ENCODE measurements at regions of chr2 and their contacts with region 1.

Region 1: GRCh38 chr2:172307800-172308199 is 119.6 kb upstream of the ITGA6 start:
- DNase-seq: peak; percentile 94
- H3K4me3 ChIP-seq: no peak overlapping the region
- H3K27ac ChIP-seq: peak overlapping the region; percentile 88
- H3K4me1 ChIP-seq: peaks cover 31% of the 10 kb centered on the region
- H3K27me3 ChIP-seq: no peaks in the 10 kb centered on the region
- CTCF ChIP-seq: no peak
- POLR2A ChIP-seq: no peak

Region 2: DNA sequence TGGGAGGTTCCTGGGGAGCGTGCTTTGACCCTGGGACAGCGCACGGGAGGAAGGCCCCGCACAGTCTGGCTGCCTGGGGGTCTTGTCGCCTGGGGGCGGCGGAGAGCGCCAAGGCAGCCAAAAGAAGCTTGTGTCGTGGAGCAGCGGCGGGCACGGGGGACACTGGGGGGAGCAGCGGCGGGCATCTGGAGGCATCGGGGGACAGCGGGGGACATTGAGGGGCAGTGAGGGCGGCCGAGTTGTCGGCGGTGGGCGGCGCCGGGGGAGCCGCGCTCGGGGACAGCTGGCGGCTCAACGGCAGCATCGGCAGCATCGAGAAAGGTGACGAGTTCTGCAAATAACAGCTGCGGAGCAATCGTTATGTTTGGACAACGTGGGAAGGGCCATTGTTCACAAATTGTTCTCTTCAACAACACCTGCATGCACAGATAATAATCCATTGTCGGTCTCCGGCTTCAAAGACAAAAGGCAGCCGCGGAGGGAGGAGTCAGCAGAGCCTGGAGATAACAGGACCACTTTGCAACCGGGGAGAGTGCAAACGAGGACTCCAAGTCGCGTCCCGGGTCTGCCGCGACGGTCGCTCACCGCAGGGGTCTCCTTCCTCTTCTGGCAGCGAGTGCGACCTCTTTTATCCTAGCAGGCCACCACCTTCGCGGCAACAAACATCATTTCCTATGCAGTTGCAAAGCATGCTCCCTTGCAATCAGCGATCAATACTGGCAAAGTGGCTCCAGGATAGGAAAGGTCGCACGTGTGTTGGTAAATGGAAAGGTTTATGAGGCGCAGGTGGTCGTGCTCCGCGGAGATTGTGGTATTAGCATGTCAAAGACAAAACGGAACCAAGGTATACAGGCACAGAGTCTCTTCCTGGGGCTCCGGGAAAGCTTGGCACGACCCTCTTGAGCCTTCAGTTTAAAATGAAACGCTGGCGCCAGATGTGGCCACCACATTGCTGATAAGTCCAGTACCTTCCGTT is 72.8 kb before region 1 on chr2:
- CTCF ChIA-PET with region 1: no interaction called
- POLR2A ChIA-PET with region 1: interaction called, 4 read pairs
- dilution Hi-C with region 1: no loop called
- intact Hi-C with region 1: loop called (anchors 5 kb)
- DNase-seq: peak; percentile 45
- H3K4me3 ChIP-seq: peak overlapping the region; percentile 27 to 57 (median 57)
- H3K27ac ChIP-seq: no peak overlapping the region
- H3K4me1 ChIP-seq: peaks cover 31% of the 10 kb centered on the region
- H3K27me3 ChIP-seq: no peaks in the 10 kb centered on the region
- CTCF ChIP-seq: peak in 1 of 2 donors; percentile 26
- POLR2A ChIP-seq: no peak